Endothelial cell of umbilical vein (primary cell): ENCODE measurements at regions of chr12 and their contacts with region 1.

Region 1: DNA sequence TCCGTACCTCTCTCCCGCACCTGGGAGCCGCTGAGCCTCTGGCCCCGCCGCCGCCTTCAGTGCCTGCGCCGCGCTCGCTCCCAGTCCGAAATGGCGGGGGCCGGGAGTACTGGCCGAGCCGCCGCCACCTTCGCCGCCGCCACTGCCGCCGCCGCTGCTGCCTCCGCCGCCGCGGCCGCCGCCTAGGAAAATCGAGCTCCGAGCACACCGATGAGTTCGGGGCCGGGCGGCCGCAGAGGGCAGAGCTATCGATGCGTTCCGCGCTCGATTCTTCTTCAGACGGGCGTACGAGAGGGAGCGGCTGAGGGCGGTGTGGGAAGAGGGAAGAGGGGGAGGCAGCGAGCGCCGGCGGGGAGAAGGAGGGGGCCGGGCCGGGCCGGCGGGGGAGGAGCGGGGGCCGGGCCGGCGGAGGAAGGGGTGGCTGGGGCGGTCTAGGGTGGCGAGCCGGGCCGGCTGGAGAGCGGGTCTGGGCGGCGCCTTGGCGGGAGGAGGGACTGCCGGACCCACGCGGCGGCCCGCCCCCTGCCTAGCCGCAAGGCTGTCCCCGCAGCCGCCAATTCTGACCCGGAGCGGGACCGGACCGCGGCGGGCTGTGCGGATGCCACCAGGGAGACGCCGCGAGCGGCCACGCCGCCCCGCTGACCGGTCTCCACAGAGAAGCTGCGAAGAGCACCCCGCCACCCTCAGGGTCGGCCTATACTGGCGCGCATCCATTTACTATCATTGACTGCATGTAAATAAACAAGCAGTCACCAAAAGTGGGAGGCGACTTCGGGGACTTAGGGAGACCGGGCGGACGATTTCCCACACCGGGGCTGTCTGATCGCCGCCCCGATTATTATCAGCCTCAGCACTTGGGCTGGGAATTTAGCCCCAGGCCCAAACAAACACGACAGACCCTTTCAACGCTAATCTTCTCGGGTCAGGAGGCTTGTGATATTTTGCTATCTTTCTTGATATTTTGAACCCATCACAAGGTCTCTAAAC is at the start of gene KRAS:
- DNase-seq: peak; percentile 97
- H3K4me3 ChIP-seq: peak within 1 kb of the TSS; percentile 78 to 94 (median 88)
- H3K27ac ChIP-seq: peak within 1 kb of the TSS; percentile 47
- H3K4me1 ChIP-seq: peaks cover 10% of the 10 kb centered on the region
- H3K27me3 ChIP-seq: peaks cover 6 to 25% of the 10 kb centered on the region in 2 experiments
- CTCF ChIP-seq: no peak
- POLR2A ChIP-seq: no peak
- total RNA-seq, gene KRAS: 22.8 and 25.3 TPM in 2 replicates

Region 2: GRCh38 chr12:25195056-25195971 is 55.7 kb before region 1 on chr12 and contains the starts of genes DNAI7 and ETFRF1:
- CTCF ChIA-PET with region 1: no interaction called
- POLR2A ChIA-PET with region 1: interaction called, 3 read pairs
- dilution Hi-C with region 1: no loop called
- intact Hi-C with region 1: loop called (anchors 1 kb)
- DNase-seq: peak; percentile 96
- H3K4me3 ChIP-seq: peak within 1 kb of the TSS; percentile 44 to 98 (median 97)
- H3K27ac ChIP-seq: peak within 1 kb of the TSS; percentile 90
- H3K4me1 ChIP-seq: peaks cover 13% of the 10 kb centered on the region
- H3K27me3 ChIP-seq: no peaks in the 10 kb centered on the region
- CTCF ChIP-seq: no peak
- POLR2A ChIP-seq: peak; percentile 89
- total RNA-seq, gene DNAI7: not detected in 2 replicates
- total RNA-seq, gene ETFRF1: 8.1 and 10.6 TPM in 2 replicates

Region 3: GRCh38 chr12:25276199-25276937 is 25.3 kb after region 1 on chr12:
- CTCF ChIA-PET with region 1: no interaction called
- POLR2A ChIA-PET with region 1: interaction called, 11 read pairs
- dilution Hi-C with region 1: no loop called
- intact Hi-C with region 1: no loop called
- DNase-seq: peak; percentile 72
- H3K4me3 ChIP-seq: no peak overlapping the region
- H3K27ac ChIP-seq: no peak overlapping the region
- H3K4me1 ChIP-seq: peaks cover 2% of the 10 kb centered on the region
- H3K27me3 ChIP-seq: no peaks in the 10 kb centered on the region
- CTCF ChIP-seq: no peak
- POLR2A ChIP-seq: no peak

Region 4: GRCh38 chr12:25328072-25328712 is 77.2 kb after region 1 on chr12:
- CTCF ChIA-PET with region 1: no interaction called
- POLR2A ChIA-PET with region 1: no interaction called
- dilution Hi-C with region 1: no loop called
- intact Hi-C with region 1: loop called (anchors 5 kb)
- DNase-seq: no peak
- H3K4me3 ChIP-seq: no peak overlapping the region
- H3K27ac ChIP-seq: no peak overlapping the region
- H3K4me1 ChIP-seq: peaks cover 4% of the 10 kb centered on the region
- H3K27me3 ChIP-seq: peaks cover 6 to 11% of the 10 kb centered on the region in 2 experiments
- CTCF ChIP-seq: no peak
- POLR2A ChIP-seq: no peak

Region 5: GRCh38 chr12:25557830-25558436 is 306.9 kb after region 1 on chr12:
- CTCF ChIA-PET with region 1: no interaction called
- POLR2A ChIA-PET with region 1: no interaction called
- dilution Hi-C with region 1: no loop called
- intact Hi-C with region 1: loop called (anchors 10 kb)
- DNase-seq: peak; percentile 42
- H3K4me3 ChIP-seq: no peak overlapping the region
- H3K27ac ChIP-seq: no peak overlapping the region
- H3K4me1 ChIP-seq: no peaks in the 10 kb centered on the region
- H3K27me3 ChIP-seq: no peaks in the 10 kb centered on the region
- CTCF ChIP-seq: peak; percentile 26 to 36
- POLR2A ChIP-seq: no peak